Activated CD4-positive, alpha-beta memory T cell treated with anti-CD3 and anti-CD28 coated beads, Interleukin-2, amount 10 ng/mL, durations not matched to agents 7 days and 5 days (primary cell): ENCODE measurements at regions of chr11 and their contacts with region 1.

Region 1: GRCh38 chr11:17063171-17064002 is 14.1 kb downstream of the RPS13 start:
- DNase-seq: peak; percentile 55
- H3K4me3 Mint-ChIP-seq: no peak overlapping the region
- H3K27ac Mint-ChIP-seq: no peak overlapping the region
- H3K4me1 Mint-ChIP-seq: no peaks in the 10 kb centered on the region
- H3K27me3 Mint-ChIP-seq: no peaks in the 10 kb centered on the region

Region 2: GRCh38 chr11:16843294-16843693 is 220.1 kb before region 1 on chr11:
- CTCF ChIA-PET with region 1: no interaction called
- POLR2A ChIA-PET with region 1: no interaction called
- DNase-seq: no peak
- H3K4me3 Mint-ChIP-seq: no peak overlapping the region
- H3K27ac Mint-ChIP-seq: no peak overlapping the region
- H3K4me1 Mint-ChIP-seq: no peaks in the 10 kb centered on the region
- H3K27me3 Mint-ChIP-seq: no peaks in the 10 kb centered on the region

Region 3: DNA sequence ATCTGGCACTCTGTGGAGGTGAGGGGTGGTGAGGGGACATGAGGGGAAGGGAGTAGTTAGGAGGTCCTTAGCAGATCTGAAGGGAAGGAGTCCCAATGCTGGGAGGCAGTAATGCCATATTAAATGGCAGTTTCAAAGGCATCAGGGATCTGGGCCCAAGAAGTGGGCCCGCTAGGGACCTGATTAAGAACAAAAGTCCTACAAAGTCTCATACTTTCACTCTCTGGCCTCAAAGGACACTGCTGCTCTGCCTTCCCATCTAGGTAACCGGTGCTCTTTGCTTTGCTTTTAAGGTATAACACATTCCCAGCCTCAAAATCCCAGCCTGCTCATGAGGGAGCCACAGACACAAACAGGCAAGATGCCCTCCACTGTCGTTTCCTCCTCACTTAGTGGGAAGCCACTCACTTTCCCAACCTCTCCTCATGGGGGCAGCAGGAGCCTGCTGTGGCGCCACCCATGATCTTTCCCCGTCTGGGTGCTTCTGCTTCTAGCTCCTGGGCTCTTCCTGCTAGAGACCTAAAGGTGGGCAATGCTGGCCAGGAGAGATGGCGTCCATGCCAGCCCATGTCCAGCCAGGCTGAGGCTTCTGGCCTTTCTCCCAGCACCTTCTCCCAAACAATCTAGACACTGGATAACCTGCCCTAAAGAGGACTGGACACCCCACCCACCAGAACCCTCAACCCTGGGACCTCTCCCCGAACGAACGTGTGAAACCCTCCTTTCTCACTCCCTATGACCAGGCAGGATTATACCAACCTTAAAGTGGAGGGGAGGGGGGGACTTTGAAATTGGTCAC is 117.5 kb before region 1 on chr11:
- CTCF ChIA-PET with region 1: interaction called, 18 read pairs
- POLR2A ChIA-PET with region 1: no interaction called
- DNase-seq: peak; percentile 40
- H3K4me3 Mint-ChIP-seq: no peak overlapping the region
- H3K27ac Mint-ChIP-seq: no peak overlapping the region
- H3K4me1 Mint-ChIP-seq: peaks cover 6% of the 10 kb centered on the region
- H3K27me3 Mint-ChIP-seq: no peaks in the 10 kb centered on the region

Region 4: GRCh38 chr11:17046690-17047089 is 16.7 kb before region 1 on chr11:
- CTCF ChIA-PET with region 1: no interaction called
- POLR2A ChIA-PET with region 1: no interaction called
- DNase-seq: no peak
- H3K4me3 Mint-ChIP-seq: no peak overlapping the region
- H3K27ac Mint-ChIP-seq: no peak overlapping the region
- H3K4me1 Mint-ChIP-seq: no peaks in the 10 kb centered on the region
- H3K27me3 Mint-ChIP-seq: no peaks in the 10 kb centered on the region

Region 5: GRCh38 chr11:17102462-17102861 is 39.1 kb after region 1 on chr11:
- CTCF ChIA-PET with region 1: no interaction called
- POLR2A ChIA-PET with region 1: no interaction called
- DNase-seq: no peak
- H3K4me3 Mint-ChIP-seq: no peak overlapping the region
- H3K27ac Mint-ChIP-seq: no peak overlapping the region
- H3K4me1 Mint-ChIP-seq: no peaks in the 10 kb centered on the region
- H3K27me3 Mint-ChIP-seq: no peaks in the 10 kb centered on the region

Region 6: DNA sequence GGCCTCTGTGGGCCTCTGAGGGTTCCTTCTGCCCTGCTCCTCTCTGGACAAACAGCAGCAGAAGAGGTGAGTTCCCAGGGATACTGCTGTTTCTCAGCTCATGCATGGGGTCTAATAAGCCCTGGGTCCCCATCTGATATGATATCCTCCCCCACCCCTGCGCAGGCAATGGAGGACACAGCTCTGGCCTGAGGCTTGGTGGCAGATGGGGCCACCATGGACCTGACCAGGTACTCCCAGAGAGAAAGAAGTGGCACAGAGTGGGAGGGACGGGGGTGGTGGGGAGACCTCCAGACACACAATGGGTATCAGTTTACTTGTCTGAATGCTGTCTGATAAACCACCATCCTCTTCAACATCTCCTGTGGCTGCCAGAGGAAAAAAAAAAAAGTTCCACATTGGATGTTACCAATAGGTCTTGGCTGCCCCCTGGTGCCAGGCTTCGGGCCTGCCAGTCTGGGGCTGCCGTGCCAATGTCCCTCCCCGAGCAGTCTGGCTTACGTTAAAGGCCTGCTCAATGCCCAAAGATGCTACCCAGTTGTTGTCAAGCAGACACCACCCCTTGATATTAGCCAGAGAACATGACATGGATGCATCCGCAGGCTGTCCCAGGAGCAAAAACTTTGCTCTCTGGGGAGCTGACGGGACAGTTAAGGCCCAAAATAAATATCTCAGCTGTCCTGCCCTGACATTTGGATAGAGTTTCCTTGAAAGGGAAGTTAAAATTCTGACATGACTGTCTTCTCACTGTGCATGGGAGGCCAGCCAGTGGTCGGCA is 441.1 kb after region 1 on chr11:
- CTCF ChIA-PET with region 1: no interaction called
- POLR2A ChIA-PET with region 1: no interaction called
- DNase-seq: peak; percentile 77
- H3K4me3 Mint-ChIP-seq: no peak overlapping the region
- H3K27ac Mint-ChIP-seq: no peak overlapping the region
- H3K4me1 Mint-ChIP-seq: no peaks in the 10 kb centered on the region
- H3K27me3 Mint-ChIP-seq: no peaks in the 10 kb centered on the region